Activated CD4-positive, alpha-beta memory T cell treated with anti-CD3 and anti-CD28 coated beads for 36 hours (primary cell): ENCODE measurements at regions of chr16 and their contacts with region 1.

Region 1: DNA sequence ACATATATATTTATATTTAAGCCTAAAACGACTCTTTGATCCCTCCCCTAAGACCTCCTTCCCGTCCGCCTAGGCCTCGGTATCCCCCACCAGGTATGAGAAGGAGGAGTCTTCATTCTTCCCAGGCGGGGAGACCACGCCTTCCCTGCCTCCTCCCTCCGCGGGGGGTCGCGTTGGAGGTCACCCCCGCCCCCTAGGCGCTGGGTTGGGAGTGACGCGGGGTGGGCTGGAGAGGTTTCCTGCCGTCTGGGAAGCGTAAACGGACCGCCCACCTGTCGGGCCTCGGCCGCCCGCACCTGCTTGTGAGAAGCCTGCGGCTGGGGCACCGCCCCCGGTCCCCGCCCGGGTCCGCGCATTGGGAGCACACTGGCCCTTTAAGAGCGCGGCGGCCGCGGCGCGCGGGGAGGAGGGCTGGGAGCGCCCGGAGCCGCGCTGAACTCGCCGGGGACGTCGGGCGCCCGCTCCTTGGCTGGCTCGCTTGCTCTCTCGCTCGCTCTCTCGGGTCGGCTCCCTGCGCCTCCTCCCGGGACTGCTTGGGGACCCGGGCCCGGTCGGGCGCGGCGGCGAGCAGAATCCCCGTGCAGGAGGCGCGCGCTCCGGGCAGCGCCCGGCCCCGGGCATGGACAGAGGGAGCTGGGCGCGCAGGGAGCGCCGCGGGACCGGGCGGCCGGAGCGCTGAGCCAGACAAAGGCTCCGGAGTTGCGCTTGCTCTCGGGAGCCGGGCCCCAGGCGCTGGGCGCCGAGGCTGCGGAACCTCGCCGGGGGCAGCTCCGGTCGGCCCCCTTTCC is at the start of gene MMP15:
- DNase-seq: peak; percentile 77
- H3K4me3 Mint-ChIP-seq: peak within 1 kb of the TSS; percentile 81
- H3K27ac Mint-ChIP-seq: peak within 1 kb of the TSS; percentile 56
- H3K4me1 Mint-ChIP-seq: peaks cover 9% of the 10 kb centered on the region
- H3K27me3 Mint-ChIP-seq: no peaks in the 10 kb centered on the region
- total RNA-seq, gene MMP15: 0.46 to 0.71 TPM

Region 2: GRCh38 chr16:58121132-58121531 is 95.6 kb after region 1 on chr16:
- CTCF ChIA-PET with region 1: interaction called, 10 read pairs
- POLR2A ChIA-PET with region 1: no interaction called
- intact Hi-C with region 1: no loop called
- DNase-seq: no peak
- H3K4me3 Mint-ChIP-seq: no peak overlapping the region
- H3K27ac Mint-ChIP-seq: no peak overlapping the region
- H3K4me1 Mint-ChIP-seq: peaks cover 47% of the 10 kb centered on the region
- H3K27me3 Mint-ChIP-seq: no peaks in the 10 kb centered on the region

Region 3: GRCh38 chr16:58198022-58198683 is 172.6 kb after region 1 on chr16 and contains the start of gene CSNK2A2:
- CTCF ChIA-PET with region 1: no interaction called
- POLR2A ChIA-PET with region 1: no interaction called
- intact Hi-C with region 1: loop called (anchors 10 kb)
- DNase-seq: peak; percentile 76
- H3K4me3 Mint-ChIP-seq: peak within 1 kb of the TSS; percentile 89
- H3K27ac Mint-ChIP-seq: peak within 1 kb of the TSS; percentile 54
- H3K4me1 Mint-ChIP-seq: peaks cover 33% of the 10 kb centered on the region
- H3K27me3 Mint-ChIP-seq: peaks cover 8% of the 10 kb centered on the region
- total RNA-seq, gene CSNK2A2: 76.9 to 82.0 TPM

Region 4: DNA sequence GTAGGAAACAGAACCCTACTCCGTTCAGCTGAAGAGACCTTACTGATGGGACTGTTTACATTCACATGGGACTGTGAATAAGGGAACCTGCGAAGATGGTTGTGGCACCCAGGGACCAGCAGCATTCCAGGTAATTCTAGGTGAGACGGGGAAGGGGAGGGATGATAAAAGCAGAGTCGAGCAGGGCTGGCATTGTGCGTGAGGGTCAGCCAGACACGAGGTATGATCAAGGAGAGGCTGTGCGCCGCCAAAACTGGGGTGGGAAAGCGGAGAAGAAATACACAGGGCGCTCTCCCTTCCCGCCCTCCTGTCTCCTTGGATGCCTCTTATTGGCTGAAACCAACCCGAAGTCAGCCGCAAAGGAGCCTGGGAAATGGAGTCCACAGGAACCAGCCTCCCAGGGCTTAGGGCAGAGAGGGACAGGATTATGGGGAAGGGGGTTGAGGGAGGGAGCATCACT is 210.7 kb after region 1 on chr16:
- CTCF ChIA-PET with region 1: no interaction called
- POLR2A ChIA-PET with region 1: interaction called, 5 read pairs
- intact Hi-C with region 1: loop called (anchors 10 kb)
- DNase-seq: peak; percentile 78
- H3K4me3 Mint-ChIP-seq: peak overlapping the region; percentile 74
- H3K27ac Mint-ChIP-seq: no peak overlapping the region
- H3K4me1 Mint-ChIP-seq: peaks cover 5% of the 10 kb centered on the region
- H3K27me3 Mint-ChIP-seq: peaks cover 25% of the 10 kb centered on the region

Region 5: GRCh38 chr16:58306327-58306726 is 280.8 kb after region 1 on chr16:
- CTCF ChIA-PET with region 1: no interaction called
- POLR2A ChIA-PET with region 1: no interaction called
- intact Hi-C with region 1: loop called (anchors 2 kb)
- DNase-seq: peak; percentile 69
- H3K4me3 Mint-ChIP-seq: no peak overlapping the region
- H3K27ac Mint-ChIP-seq: no peak overlapping the region
- H3K4me1 Mint-ChIP-seq: no peaks in the 10 kb centered on the region
- H3K27me3 Mint-ChIP-seq: peaks cover 8% of the 10 kb centered on the region

Region 6: GRCh38 chr16:58487566-58488351 is 462.2 kb after region 1 on chr16:
- CTCF ChIA-PET with region 1: no interaction called
- POLR2A ChIA-PET with region 1: no interaction called
- intact Hi-C with region 1: loop called (anchors 10 kb)
- DNase-seq: peak; percentile 78
- H3K4me3 Mint-ChIP-seq: no peak overlapping the region
- H3K27ac Mint-ChIP-seq: no peak overlapping the region
- H3K4me1 Mint-ChIP-seq: no peaks in the 10 kb centered on the region
- H3K27me3 Mint-ChIP-seq: peaks cover 2% of the 10 kb centered on the region